AG04450 (cell line): ENCODE measurements at regions of chr3 and their contacts with region 1.

Region 1: GRCh38 chr3:101573449-101574387 is at the start of gene PCNP:
- DNase-seq: peak; percentile 96
- H3K4me3 ChIP-seq: peak within 1 kb of the TSS; percentile 91
- H3K27ac ChIP-seq: peak within 1 kb of the TSS; percentile 93
- H3K27me3 ChIP-seq: no peaks in the 10 kb centered on the region
- CTCF ChIP-seq: peak; percentile 87
- polyA plus RNA-seq, gene PCNP: 68.3 and 97.7 TPM in 2 replicates

Region 2: GRCh38 chr3:101561630-101562328 is 11.9 kb before region 1 on chr3 and contains the start of gene TRMT10C:
- CTCF ChIA-PET with region 1: interaction called, 14 read pairs
- POLR2A ChIA-PET with region 1: interaction called, 6 read pairs
- DNase-seq: peak; percentile 77
- H3K4me3 ChIP-seq: peak within 1 kb of the TSS; percentile 95
- H3K27ac ChIP-seq: peak within 1 kb of the TSS; percentile 81
- H3K27me3 ChIP-seq: peaks cover under 1% of the 10 kb centered on the region
- CTCF ChIP-seq: no peak
- polyA plus RNA-seq, gene TRMT10C: 19.4 and 26.1 TPM in 2 replicates

Region 3: GRCh38 chr3:101676765-101677435 is 103.2 kb after region 1 on chr3 and contains the start of gene ZBTB11:
- CTCF ChIA-PET with region 1: interaction called, 4 read pairs
- POLR2A ChIA-PET with region 1: interaction called, 19 read pairs
- DNase-seq: peak; percentile 100
- H3K4me3 ChIP-seq: peak within 1 kb of the TSS; percentile 96
- H3K27ac ChIP-seq: peak within 1 kb of the TSS; percentile 91
- H3K27me3 ChIP-seq: no peaks in the 10 kb centered on the region
- CTCF ChIP-seq: peak; percentile 69
- polyA plus RNA-seq, gene ZBTB11: 9.8 and 13.8 TPM in 2 replicates

Region 4: GRCh38 chr3:101685870-101686412 is 112.2 kb after region 1 on chr3:
- CTCF ChIA-PET with region 1: no interaction called
- POLR2A ChIA-PET with region 1: interaction called, 12 read pairs
- DNase-seq: no peak
- H3K4me3 ChIP-seq: peak overlapping the region; percentile 97
- H3K27ac ChIP-seq: peak overlapping the region; percentile 83
- H3K27me3 ChIP-seq: no peaks in the 10 kb centered on the region
- CTCF ChIP-seq: no peak